Heart right ventricle (tissue), 16 donors: ENCODE measurements at regions of chr16 and their contacts with region 1.

Region 1: GRCh38 chr16:65988024-65988595 is 378.4 kb upstream of the CDH5 start:
- DNase-seq: no peak
- ATAC-seq: no peak
- H3K4me3 ChIP-seq: no peak overlapping the region
- H3K27ac ChIP-seq: no peak overlapping the region
- H3K4me1 ChIP-seq: no peaks in the 10 kb centered on the region
- H3K27me3 ChIP-seq: peaks cover 0 to 31% (median 6%) of the 10 kb centered on the region in 7 donors
- CTCF ChIP-seq: no peak

Region 2: GRCh38 chr16:65922923-65923322 is 65.2 kb before region 1 on chr16:
- intact Hi-C with region 1: loop called in 1 of 10 experiments (anchors 10 kb)
- DNase-seq: no peak
- ATAC-seq: no peak
- H3K4me3 ChIP-seq: no peak overlapping the region
- H3K27ac ChIP-seq: no peak overlapping the region
- H3K4me1 ChIP-seq: no peaks in the 10 kb centered on the region
- H3K27me3 ChIP-seq: peaks cover 0 to 16% (median 0%) of the 10 kb centered on the region in 7 donors
- CTCF ChIP-seq: no peak

Region 3: DNA sequence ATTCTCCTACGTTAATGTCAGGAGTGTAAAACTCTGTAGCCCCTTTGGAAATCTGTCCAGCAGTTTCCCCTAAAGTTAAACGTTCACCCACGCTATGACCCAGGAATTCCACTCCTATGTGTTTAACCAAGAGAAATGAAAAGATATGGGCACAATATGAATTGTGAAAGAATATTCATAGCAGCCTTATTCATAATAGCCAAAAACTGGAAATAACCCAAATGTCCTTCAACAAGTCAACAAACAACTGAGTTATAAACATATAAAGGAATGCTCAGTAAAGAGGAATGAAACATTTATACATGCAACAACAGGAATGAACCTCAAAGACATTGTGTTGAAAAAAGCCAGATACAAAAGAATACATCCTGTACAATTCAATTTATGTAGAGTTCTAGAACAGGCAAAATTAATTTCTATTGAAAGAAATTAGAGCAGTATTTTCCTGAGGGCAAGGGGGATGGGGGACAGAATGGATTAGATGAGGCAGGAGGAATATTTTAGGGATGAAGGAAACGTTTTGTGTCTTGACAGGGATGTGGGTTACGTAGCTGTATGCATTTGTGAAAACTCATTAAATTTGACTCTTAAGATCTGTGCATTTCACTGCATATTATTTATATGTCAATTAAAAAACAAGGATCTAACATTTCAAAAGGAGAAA is 91.7 kb after region 1 on chr16:
- intact Hi-C with region 1: no loop called
- DNase-seq: no peak
- ATAC-seq: no peak
- H3K4me3 ChIP-seq: no peak overlapping the region
- H3K27ac ChIP-seq: no peak overlapping the region
- H3K4me1 ChIP-seq: peaks cover 0 to 5% (median 0%) of the 10 kb centered on the region in 9 donors
- H3K27me3 ChIP-seq: peaks cover 0 to 3% (median 0%) of the 10 kb centered on the region in 7 donors
- CTCF ChIP-seq: no peak